ENCODE measurements at regions of chr1 and their contacts with region 1.

Region 1: DNA sequence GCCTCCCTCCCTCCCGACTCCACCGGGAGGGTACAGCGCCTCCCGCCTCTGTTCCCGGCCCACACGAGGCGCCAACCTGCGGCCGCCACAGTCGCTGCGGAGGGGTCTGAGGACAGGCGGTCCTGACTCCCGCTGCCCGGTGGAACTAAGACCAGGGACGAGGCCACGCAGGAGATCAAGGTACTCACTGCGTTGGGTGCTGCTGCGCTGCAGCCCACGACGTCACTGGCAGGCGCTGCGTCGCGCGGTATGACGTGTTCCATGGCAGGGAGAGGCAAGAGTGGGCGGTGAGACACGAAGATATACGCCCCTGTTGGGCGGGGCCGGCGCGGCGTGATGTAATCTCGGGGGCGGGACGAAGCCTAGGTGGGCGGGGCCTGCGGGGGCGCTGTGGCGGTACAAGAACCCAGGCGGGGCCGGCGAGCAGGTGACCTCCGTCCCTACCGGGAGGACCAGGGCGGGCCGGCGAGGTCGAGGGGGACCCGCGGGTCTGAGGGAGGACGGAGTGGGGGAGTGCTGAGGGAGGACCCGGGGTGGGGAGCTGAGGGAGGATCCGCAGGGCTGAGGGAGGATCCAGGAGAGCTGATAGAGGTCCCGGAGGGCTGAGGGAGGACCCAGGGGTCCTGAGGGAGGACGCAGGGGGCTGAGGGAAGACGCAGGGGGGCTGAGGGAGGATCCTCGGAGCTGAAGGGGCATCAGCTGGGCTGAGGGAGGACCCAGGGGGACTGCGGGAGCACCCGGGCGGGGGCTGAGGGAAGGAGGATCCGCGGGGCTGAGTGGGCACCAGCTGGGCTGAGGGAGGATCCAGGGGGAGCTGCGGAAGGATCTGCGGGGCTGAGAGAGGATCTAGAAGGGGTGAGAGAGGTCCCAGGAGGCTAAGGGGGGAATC is at the start of gene MRPL55:
- DNase-seq: peak; percentile 96 to 100 (median 98)
- ATAC-seq: peak; percentile 92
- H3K4me3 ChIP-seq: peak within 1 kb of the TSS; percentile 99
- H3K4me3 Mint-ChIP-seq: peak within 1 kb of the TSS; percentile 92
- H3K27ac ChIP-seq: peak within 1 kb of the TSS; percentile 84 to 90
- H3K27ac Mint-ChIP-seq: peak within 1 kb of the TSS; percentile 93
- H3K4me1 ChIP-seq: peaks cover 28% of the 10 kb centered on the region
- H3K4me1 Mint-ChIP-seq: peaks cover 32% of the 10 kb centered on the region
- H3K27me3 ChIP-seq: no peaks in the 10 kb centered on the region
- H3K27me3 Mint-ChIP-seq: no peaks in the 10 kb centered on the region
- CTCF ChIP-seq: no peak
- total RNA-seq, gene MRPL55: 120 to 128 TPM

Region 2: DNA sequence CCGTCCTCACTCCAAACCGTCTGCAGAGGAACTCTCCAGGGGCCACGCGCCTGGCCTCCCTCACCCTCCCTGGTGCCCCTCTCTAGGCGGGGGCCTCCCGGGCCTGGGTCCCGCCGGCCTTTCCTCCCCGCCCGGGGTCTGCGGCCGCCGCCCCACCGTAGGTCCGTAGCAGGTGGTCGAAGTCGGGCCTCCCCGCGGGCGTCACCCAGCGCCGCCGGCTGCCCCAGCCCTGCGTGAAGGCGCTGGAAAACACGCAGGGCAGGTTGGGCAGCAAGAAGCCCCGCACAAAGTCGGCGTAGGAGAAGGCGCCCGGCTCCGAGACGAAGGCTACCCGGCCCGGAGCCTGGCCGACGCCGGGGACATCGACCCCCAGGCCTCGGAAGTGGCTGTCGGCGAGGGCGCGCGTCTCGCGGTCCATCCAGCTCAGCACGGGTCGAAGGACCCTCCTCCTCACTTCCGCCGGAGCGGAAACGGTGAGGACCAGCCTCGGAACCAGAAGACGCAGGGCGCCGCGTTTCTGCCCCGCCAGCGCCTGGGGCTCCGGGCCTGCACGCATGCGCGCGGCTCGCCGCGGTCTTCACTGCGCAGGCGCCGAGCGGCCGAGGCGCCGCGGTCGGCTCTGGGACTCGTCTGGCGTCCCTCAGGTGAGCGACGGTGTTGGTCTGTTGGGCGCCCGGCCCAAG is 374.3 kb before region 1 on chr1 and contains the starts of genes JMJD4 and SNAP47:
- CTCF ChIA-PET with region 1: no interaction called
- POLR2A ChIA-PET with region 1: no interaction called
- intact Hi-C with region 1: loop called in 1 of 2 experiments (anchors 10 kb)
- DNase-seq: peak; percentile 86 to 96 (median 92)
- ATAC-seq: peak; percentile 90
- H3K4me3 ChIP-seq: peak within 1 kb of the TSS; percentile 71
- H3K4me3 Mint-ChIP-seq: peak within 1 kb of the TSS; percentile 92
- H3K27ac ChIP-seq: peak within 1 kb of the TSS in 1 of 2 donors; percentile 69
- H3K27ac Mint-ChIP-seq: peak within 1 kb of the TSS; percentile 83
- H3K4me1 ChIP-seq: peaks cover 37% of the 10 kb centered on the region
- H3K4me1 Mint-ChIP-seq: peaks cover 56% of the 10 kb centered on the region
- H3K27me3 ChIP-seq: no peaks in the 10 kb centered on the region
- H3K27me3 Mint-ChIP-seq: no peaks in the 10 kb centered on the region
- CTCF ChIP-seq: no peak
- total RNA-seq, gene JMJD4: 11.4 to 11.9 TPM
- total RNA-seq, gene SNAP47: 12.8 to 14.0 TPM

Region 3: GRCh38 chr1:228082135-228082891 is 27.0 kb before region 1 on chr1 and contains the start of gene ARF1:
- CTCF ChIA-PET with region 1: no interaction called
- POLR2A ChIA-PET with region 1: interaction called, 22 read pairs
- intact Hi-C with region 1: loop called in 1 of 2 experiments (anchors 2 kb)
- DNase-seq: peak; percentile 81 to 97 (median 93)
- ATAC-seq: peak; percentile 84
- H3K4me3 ChIP-seq: peak within 1 kb of the TSS; percentile 80
- H3K4me3 Mint-ChIP-seq: peak within 1 kb of the TSS; percentile 97
- H3K27ac ChIP-seq: peak within 1 kb of the TSS; percentile 86 to 89
- H3K27ac Mint-ChIP-seq: peak within 1 kb of the TSS; percentile 99
- H3K4me1 ChIP-seq: peaks cover 62% of the 10 kb centered on the region
- H3K4me1 Mint-ChIP-seq: peaks cover 53% of the 10 kb centered on the region
- H3K27me3 ChIP-seq: no peaks in the 10 kb centered on the region
- H3K27me3 Mint-ChIP-seq: no peaks in the 10 kb centered on the region
- CTCF ChIP-seq: no peak
- total RNA-seq, gene ARF1: 318 to 322 TPM

Region 4: DNA sequence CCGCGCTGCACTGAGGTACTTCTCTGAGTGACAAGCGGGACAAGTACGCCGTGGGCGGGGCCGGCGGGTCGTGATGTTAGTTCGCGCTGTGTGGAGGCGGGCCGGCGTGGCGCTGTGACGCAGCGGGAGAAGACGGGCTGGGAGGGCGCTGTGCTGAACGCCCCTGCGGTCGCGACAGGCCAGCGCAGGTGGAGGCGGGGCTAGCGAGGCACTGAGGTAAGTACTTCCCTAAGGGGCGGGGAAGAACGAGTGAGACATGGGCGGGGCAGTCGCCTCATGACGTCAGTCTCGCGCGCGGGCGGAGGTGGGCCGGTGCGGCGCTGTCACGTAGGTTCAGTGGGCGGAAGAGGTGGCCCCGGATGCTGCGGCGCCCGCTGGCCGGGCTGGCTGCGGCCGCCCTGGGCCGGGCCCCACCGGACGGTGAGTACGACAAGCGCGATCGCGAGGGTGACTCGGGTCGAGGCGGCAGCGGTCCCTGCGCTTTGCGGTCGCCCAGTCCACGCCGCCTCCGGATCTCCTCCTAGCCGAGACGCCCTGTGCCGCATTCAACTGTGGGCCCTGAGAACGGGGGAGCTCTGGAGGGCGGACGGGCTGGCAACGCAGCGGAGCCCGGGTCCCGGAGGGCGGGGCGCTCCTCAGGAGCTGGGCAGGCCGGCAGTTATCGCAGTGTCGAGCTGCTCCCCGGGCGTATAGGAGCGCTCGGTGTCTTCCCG is 30.8 kb after region 1 on chr1 and contains the start of gene GUK1:
- CTCF ChIA-PET with region 1: no interaction called
- POLR2A ChIA-PET with region 1: interaction called, 3 read pairs
- intact Hi-C with region 1: loop called (anchors 1 to 2 kb)
- DNase-seq: peak; percentile 99 to 100 (median 100)
- ATAC-seq: peak; percentile 88
- H3K4me3 ChIP-seq: peak within 1 kb of the TSS; percentile 78
- H3K4me3 Mint-ChIP-seq: peak within 1 kb of the TSS; percentile 90
- H3K27ac ChIP-seq: peak within 1 kb of the TSS; percentile 92 to 97
- H3K27ac Mint-ChIP-seq: peak within 1 kb of the TSS; percentile 94
- H3K4me1 ChIP-seq: peaks cover 51% of the 10 kb centered on the region
- H3K4me1 Mint-ChIP-seq: peaks cover 44% of the 10 kb centered on the region
- H3K27me3 ChIP-seq: no peaks in the 10 kb centered on the region
- H3K27me3 Mint-ChIP-seq: no peaks in the 10 kb centered on the region
- CTCF ChIP-seq: no peak
- total RNA-seq, gene GUK1: 373 to 378 TPM

Region 5: DNA sequence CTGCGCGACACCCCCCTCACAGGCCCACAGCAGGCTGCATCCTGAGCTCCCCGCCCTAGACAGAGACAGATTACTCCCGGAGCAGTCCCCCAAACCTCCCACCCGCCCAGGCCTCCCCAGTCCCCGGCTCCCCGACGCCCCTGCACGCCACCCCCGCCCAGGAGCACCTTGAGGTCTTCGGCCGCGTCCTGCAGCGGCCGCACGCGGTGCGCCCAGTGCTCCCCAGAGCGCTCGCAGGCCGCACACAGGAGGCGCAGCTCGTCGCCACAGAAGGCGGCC is 296.6 kb after region 1 on chr1:
- CTCF ChIA-PET with region 1: no interaction called
- POLR2A ChIA-PET with region 1: no interaction called
- intact Hi-C with region 1: loop called in 1 of 2 experiments (anchors 10 kb)
- DNase-seq: no peak
- ATAC-seq: peak; percentile 10
- H3K4me3 ChIP-seq: peak overlapping the region; percentile 79
- H3K4me3 Mint-ChIP-seq: peak overlapping the region; percentile 96
- H3K27ac ChIP-seq: peak overlapping the region in 1 of 2 donors; percentile 39
- H3K27ac Mint-ChIP-seq: peak overlapping the region; percentile 90
- H3K4me1 ChIP-seq: peaks cover 65% of the 10 kb centered on the region
- H3K4me1 Mint-ChIP-seq: peaks cover 47% of the 10 kb centered on the region
- H3K27me3 ChIP-seq: no peaks in the 10 kb centered on the region
- H3K27me3 Mint-ChIP-seq: no peaks in the 10 kb centered on the region
- CTCF ChIP-seq: no peak